ENCODE measurements at regions of chr3 and their contacts with region 1.

Region 1: DNA sequence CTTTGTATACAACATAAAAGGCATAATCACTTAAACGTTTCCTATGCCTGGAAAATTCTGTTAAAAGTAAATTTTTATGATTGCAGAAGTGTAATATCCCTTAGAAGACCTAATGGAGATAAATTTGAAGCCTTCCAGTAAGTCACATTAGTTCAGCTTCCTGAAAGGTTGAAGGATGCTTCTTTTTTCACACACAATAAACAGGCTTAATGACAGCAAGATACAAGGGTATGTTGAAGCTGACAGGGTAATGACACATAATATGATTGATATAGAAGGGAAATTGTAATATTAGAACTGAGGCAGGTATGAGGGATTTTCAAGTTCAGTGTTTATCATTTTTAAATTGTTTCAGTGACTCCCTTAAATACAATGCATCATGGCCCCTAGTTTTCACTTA is 161.8 kb upstream of the NAALADL2 start:
- DNase-seq: no peak
- ATAC-seq: no peak
- H3K4me3 ChIP-seq: no peak overlapping the region
- H3K27ac ChIP-seq: no peak overlapping the region
- H3K4me1 ChIP-seq: no peaks in the 10 kb centered on the region
- H3K27me3 ChIP-seq: no peaks in the 10 kb centered on the region

Region 2: DNA sequence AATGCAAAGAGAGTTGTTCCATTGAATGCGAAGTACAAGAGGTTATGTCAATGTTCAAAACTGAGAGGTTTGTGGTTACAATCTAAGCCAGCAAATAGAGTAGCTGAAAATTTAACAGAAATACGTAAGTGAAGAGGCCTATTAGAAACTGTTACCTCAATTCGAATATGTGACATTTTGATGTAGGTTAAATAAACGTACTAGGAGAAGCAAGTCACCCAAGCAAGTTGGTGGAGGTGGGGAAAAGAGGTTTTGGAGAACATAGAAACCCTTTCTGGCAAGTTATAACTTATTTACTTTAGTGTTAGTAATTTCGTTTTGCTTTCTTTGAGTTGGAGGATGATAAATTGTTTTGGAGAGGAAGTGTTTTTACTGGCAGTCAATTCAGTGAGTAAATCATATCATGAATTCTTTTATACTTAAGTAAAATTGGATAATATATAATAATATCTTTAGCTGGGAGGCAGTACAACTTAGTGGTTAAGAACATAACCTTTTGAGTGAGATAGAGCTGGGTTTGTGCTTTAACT is 70.6 kb after region 1 on chr3:
- intact Hi-C with region 1: no loop called
- DNase-seq: no peak
- ATAC-seq: peak in 1 of 2 donors; percentile 18
- H3K4me3 ChIP-seq: no peak overlapping the region
- H3K27ac ChIP-seq: no peak overlapping the region
- H3K4me1 ChIP-seq: no peaks in the 10 kb centered on the region
- H3K27me3 ChIP-seq: no peaks in the 10 kb centered on the region

Region 3: DNA sequence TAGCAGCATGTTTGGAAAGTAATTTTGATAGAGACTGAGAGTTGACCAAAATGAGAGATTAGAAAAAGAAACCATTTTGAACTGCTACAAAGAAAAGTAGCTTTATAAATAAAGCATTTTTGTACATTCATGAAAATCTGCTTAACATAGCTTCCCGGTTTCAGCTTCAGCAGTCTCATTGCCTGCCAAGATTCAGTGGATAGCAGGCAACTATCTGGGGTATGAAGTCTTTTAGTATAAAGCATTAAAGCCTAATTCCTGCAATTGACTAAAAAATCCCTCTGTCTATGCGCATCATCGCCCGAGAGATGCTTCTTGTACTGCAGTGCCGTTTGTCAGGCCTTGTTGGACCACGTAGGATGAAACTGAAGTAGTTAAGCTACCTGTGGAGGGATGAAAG is 750.2 kb after region 1 on chr3:
- intact Hi-C with region 1: no loop called
- DNase-seq: no peak
- ATAC-seq: no peak
- H3K4me3 ChIP-seq: no peak overlapping the region
- H3K27ac ChIP-seq: no peak overlapping the region
- H3K4me1 ChIP-seq: no peaks in the 10 kb centered on the region
- H3K27me3 ChIP-seq: no peaks in the 10 kb centered on the region

Region 4: GRCh38 chr3:175729466-175729865 is 1032.2 kb after region 1 on chr3:
- intact Hi-C with region 1: loop called in 1 of 4 experiments (anchors 10 kb)
- DNase-seq: no peak
- ATAC-seq: no peak
- H3K4me3 ChIP-seq: no peak overlapping the region
- H3K27ac ChIP-seq: no peak overlapping the region
- H3K4me1 ChIP-seq: no peaks in the 10 kb centered on the region
- H3K27me3 ChIP-seq: no peaks in the 10 kb centered on the region